CD8-positive, alpha-beta T cell (primary cell): ENCODE measurements at regions of chr12 and their contacts with region 1.

Region 1: DNA sequence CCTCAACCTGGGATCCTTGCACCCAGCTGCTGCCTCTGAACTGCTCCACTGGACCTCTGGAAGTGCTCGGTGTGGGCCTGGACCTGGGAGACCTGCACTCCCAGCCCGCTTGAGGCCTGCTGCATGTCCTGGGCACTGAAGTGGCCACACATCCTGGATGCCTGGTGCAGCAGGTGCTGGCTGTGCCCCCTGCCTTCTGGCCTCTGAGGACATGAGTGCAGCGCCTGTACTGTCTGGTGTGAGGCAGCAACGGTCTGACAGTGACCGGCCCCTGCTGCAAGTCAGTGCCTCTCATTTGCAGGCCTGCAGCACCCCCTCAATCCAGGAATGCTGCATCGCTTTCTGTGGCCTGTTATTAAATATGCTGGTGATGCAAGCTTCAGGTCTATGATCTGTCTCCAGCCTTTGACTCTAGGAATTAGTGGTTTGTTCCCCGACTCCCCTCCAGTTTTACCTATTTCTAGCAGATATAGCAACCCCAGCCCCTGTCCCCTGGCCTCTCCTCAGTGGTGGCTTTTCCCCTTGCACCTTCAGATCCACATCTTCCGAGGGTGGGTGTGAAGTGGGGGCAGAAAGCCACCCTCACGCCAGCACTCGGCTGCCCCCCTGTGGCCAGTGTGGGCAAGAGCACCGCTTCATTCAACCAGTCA is 3.6 kb downstream of the SMIM41 start:
- DNase-seq: peak; percentile 42 to 81 (median 66)
- ATAC-seq: peak; percentile 90
- H3K4me3 ChIP-seq: no peak overlapping the region
- H3K4me3 Mint-ChIP-seq: no peak overlapping the region
- H3K27ac ChIP-seq: no peak overlapping the region
- H3K27ac Mint-ChIP-seq: no peak overlapping the region
- H3K4me1 ChIP-seq: peaks cover 14% of the 10 kb centered on the region
- H3K4me1 Mint-ChIP-seq: peaks cover 10% of the 10 kb centered on the region
- H3K27me3 ChIP-seq: no peaks in the 10 kb centered on the region
- H3K27me3 Mint-ChIP-seq: peaks cover 4% of the 10 kb centered on the region
- CTCF ChIP-seq: peak; percentile 98

Region 2: GRCh38 chr12:51923501-51924271 is 159.4 kb before region 1 on chr12:
- CTCF ChIA-PET with region 1: no interaction called
- POLR2A ChIA-PET with region 1: no interaction called
- intact Hi-C with region 1: loop called in 1 of 2 experiments (anchors 10 kb)
- DNase-seq: peak; percentile 21 to 74 (median 55)
- ATAC-seq: peak; percentile 82
- H3K4me3 ChIP-seq: no peak overlapping the region
- H3K4me3 Mint-ChIP-seq: peak overlapping the region; percentile 43
- H3K27ac ChIP-seq: no peak overlapping the region
- H3K27ac Mint-ChIP-seq: no peak overlapping the region
- H3K4me1 ChIP-seq: peaks cover 4% of the 10 kb centered on the region
- H3K4me1 Mint-ChIP-seq: peaks cover 4% of the 10 kb centered on the region
- H3K27me3 ChIP-seq: peaks cover 0 to 7% of the 10 kb centered on the region in 2 experiments
- H3K27me3 Mint-ChIP-seq: peaks cover 3% of the 10 kb centered on the region
- CTCF ChIP-seq: peak; percentile 84

Region 3: GRCh38 chr12:51969643-51970042 is 113.5 kb before region 1 on chr12:
- CTCF ChIA-PET with region 1: no interaction called
- POLR2A ChIA-PET with region 1: no interaction called
- intact Hi-C with region 1: no loop called
- DNase-seq: no peak
- ATAC-seq: no peak
- H3K4me3 ChIP-seq: no peak overlapping the region
- H3K4me3 Mint-ChIP-seq: no peak overlapping the region
- H3K27ac ChIP-seq: no peak overlapping the region
- H3K27ac Mint-ChIP-seq: no peak overlapping the region
- H3K4me1 ChIP-seq: peaks cover 48% of the 10 kb centered on the region
- H3K4me1 Mint-ChIP-seq: peaks cover 48% of the 10 kb centered on the region
- H3K27me3 ChIP-seq: no peaks in the 10 kb centered on the region
- H3K27me3 Mint-ChIP-seq: no peaks in the 10 kb centered on the region
- CTCF ChIP-seq: no peak

Region 4: GRCh38 chr12:51980051-51980808 is 102.9 kb before region 1 on chr12:
- CTCF ChIA-PET with region 1: interaction called, 10 read pairs
- POLR2A ChIA-PET with region 1: no interaction called
- intact Hi-C with region 1: no loop called
- DNase-seq: peak; percentile 43 to 83 (median 68)
- ATAC-seq: peak; percentile 100
- H3K4me3 ChIP-seq: no peak overlapping the region
- H3K4me3 Mint-ChIP-seq: no peak overlapping the region
- H3K27ac ChIP-seq: no peak overlapping the region
- H3K27ac Mint-ChIP-seq: no peak overlapping the region
- H3K4me1 ChIP-seq: peaks cover 7% of the 10 kb centered on the region
- H3K4me1 Mint-ChIP-seq: peaks cover 26% of the 10 kb centered on the region
- H3K27me3 ChIP-seq: no peaks in the 10 kb centered on the region
- H3K27me3 Mint-ChIP-seq: no peaks in the 10 kb centered on the region
- CTCF ChIP-seq: peak; percentile 95

Region 5: DNA sequence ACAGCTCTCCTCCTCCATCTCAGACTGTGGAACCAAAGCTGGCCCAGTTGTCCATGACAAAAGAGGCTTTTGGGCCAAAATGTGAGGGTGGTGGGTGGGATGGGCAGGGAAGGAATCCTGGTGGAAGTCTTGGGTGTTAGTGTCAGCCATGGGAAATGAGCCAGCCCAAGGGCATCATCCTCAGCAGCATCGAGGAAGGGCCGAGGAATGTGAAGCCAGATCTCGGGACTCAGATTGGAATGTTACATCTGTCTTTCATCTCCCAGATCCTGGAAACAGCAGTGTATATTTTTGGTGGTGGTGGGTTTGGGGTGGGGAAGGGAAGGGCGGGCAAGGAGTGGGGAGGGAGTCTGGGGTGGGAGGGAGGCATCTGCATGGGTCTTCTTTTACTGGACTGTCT is 88.2 kb before region 1 on chr12:
- CTCF ChIA-PET with region 1: interaction called, 32 read pairs
- POLR2A ChIA-PET with region 1: no interaction called
- intact Hi-C with region 1: loop called (anchors 1 kb)
- DNase-seq: no peak
- ATAC-seq: no peak
- H3K4me3 ChIP-seq: no peak overlapping the region
- H3K4me3 Mint-ChIP-seq: no peak overlapping the region
- H3K27ac ChIP-seq: no peak overlapping the region
- H3K27ac Mint-ChIP-seq: no peak overlapping the region
- H3K4me1 ChIP-seq: no peaks in the 10 kb centered on the region
- H3K4me1 Mint-ChIP-seq: peaks cover 5% of the 10 kb centered on the region
- H3K27me3 ChIP-seq: no peaks in the 10 kb centered on the region
- H3K27me3 Mint-ChIP-seq: no peaks in the 10 kb centered on the region
- CTCF ChIP-seq: no peak

Region 6: GRCh38 chr12:52004042-52004648 is 79.0 kb before region 1 on chr12:
- CTCF ChIA-PET with region 1: interaction called, 15 read pairs
- POLR2A ChIA-PET with region 1: no interaction called
- intact Hi-C with region 1: no loop called
- DNase-seq: peak in 2 of 9 experiments; percentile 33 to 48
- ATAC-seq: no peak
- H3K4me3 ChIP-seq: no peak overlapping the region
- H3K4me3 Mint-ChIP-seq: no peak overlapping the region
- H3K27ac ChIP-seq: no peak overlapping the region
- H3K27ac Mint-ChIP-seq: no peak overlapping the region
- H3K4me1 ChIP-seq: peaks cover 20% of the 10 kb centered on the region
- H3K4me1 Mint-ChIP-seq: peaks cover 18% of the 10 kb centered on the region
- H3K27me3 ChIP-seq: peaks cover 0 to 4% of the 10 kb centered on the region in 2 experiments
- H3K27me3 Mint-ChIP-seq: no peaks in the 10 kb centered on the region
- CTCF ChIP-seq: peak; percentile 34

Region 7: GRCh38 chr12:52050761-52051541 is 32.2 kb before region 1 on chr12 and contains the start of gene NR4A1:
- CTCF ChIA-PET with region 1: interaction called, 5 read pairs
- POLR2A ChIA-PET with region 1: no interaction called
- intact Hi-C with region 1: loop called in 1 of 2 experiments (anchors 1 kb)
- DNase-seq: peak; percentile 97 to 100 (median 99)
- ATAC-seq: peak; percentile 90
- H3K4me3 ChIP-seq: peak within 1 kb of the TSS; percentile 80 to 87
- H3K4me3 Mint-ChIP-seq: peak within 1 kb of the TSS; percentile 97
- H3K27ac ChIP-seq: peak within 1 kb of the TSS; percentile 81 to 99
- H3K27ac Mint-ChIP-seq: peak within 1 kb of the TSS; percentile 99
- H3K4me1 ChIP-seq: peaks cover 30% of the 10 kb centered on the region
- H3K4me1 Mint-ChIP-seq: peaks cover 35% of the 10 kb centered on the region
- H3K27me3 ChIP-seq: no peaks in the 10 kb centered on the region
- H3K27me3 Mint-ChIP-seq: peaks cover 3% of the 10 kb centered on the region
- CTCF ChIP-seq: no peak
- total RNA-seq, gene NR4A1: 59.7 to 60.0 TPM

Region 8: DNA sequence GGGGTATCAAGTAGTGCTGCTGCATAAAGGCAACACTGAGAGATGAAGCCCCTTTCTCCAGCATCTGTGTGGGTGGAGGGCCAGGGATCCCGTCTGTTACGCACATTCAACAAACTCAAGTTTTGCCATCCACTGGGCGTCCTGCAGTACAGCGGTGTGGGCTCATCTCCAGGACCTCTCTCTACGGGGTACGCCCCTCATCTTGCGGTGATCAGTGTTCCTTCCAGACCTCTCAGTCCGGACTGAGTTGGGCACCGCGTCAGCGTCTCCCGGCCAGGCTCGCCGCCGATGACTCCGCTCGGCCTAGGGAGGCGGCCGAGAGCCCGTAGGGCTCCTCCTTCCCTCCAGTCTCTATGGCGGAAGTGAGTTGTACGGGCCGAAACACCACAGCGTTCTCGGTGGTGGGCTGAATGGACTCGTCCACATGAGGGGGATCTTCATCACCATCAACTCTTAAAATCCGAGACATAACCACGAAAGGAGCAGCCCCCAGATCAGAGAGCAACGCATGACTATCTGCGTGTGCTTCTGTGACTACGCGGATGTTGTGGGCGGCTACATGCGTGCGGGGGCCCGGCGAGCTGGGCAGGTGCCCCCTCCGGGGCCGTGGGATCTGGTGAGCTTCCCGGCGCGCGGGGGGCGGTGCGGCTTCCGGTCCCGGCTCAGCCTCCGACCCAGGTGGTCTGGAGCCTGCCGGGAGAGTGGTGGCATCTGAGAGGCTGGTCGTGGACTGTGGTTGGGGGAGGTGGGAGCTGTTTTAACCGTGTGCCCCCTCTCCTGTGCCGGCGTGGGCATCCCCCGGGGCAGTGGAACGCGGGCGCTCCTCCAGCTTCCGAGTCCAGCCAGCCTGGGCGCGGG is 13.6 kb before region 1 on chr12 and contains the start of gene ATG101:
- CTCF ChIA-PET with region 1: interaction called, 16 read pairs
- POLR2A ChIA-PET with region 1: no interaction called
- intact Hi-C with region 1: loop called in 1 of 2 experiments (anchors 1 kb)
- DNase-seq: peak; percentile 72 to 96 (median 84)
- ATAC-seq: peak; percentile 93
- H3K4me3 ChIP-seq: peak within 1 kb of the TSS; percentile 93 to 98
- H3K4me3 Mint-ChIP-seq: peak within 1 kb of the TSS; percentile 98
- H3K27ac ChIP-seq: peak within 1 kb of the TSS; percentile 87 to 96
- H3K27ac Mint-ChIP-seq: peak within 1 kb of the TSS; percentile 99
- H3K4me1 ChIP-seq: peaks cover 33% of the 10 kb centered on the region
- H3K4me1 Mint-ChIP-seq: peaks cover 47% of the 10 kb centered on the region
- H3K27me3 ChIP-seq: no peaks in the 10 kb centered on the region
- H3K27me3 Mint-ChIP-seq: no peaks in the 10 kb centered on the region
- CTCF ChIP-seq: peak; percentile 47
- total RNA-seq, gene ATG101: 19.1 to 19.3 TPM

Region 9: DNA sequence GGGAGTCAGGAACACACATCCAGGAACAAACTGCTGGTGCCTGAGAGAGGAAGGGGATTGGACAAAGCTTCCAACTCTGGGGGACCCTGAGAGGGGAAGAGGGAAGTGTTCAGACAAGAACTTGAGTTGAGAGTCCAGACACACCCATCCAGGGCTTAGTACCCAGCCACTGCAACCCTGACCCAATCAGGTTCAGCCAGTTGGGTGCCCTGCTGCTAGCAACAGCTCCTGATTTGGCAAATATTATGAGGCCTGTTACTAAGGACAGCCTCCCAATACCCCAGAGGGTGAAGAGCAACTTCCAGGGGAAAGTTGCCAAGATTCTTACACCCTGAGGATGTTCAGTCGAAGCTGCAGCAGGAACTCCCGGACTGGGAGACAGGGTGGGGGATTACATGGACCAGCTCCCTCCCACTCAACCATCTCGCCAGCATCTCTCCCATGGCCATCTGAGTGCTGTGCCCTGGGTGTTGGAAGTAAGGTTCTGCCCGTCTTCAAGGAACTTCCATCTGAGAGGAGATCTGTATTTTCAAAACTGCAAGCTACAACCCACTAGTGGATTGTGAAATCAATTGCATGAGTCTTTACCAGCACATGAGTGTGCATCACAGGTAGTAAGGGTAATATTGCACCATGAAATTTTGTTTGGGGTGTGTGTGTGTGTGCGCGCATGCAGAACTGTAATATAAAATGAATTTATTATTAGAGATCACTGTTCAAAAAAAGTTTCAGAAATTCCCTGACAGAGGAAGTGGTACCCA is 777.1 kb after region 1 on chr12:
- CTCF ChIA-PET with region 1: no interaction called
- POLR2A ChIA-PET with region 1: no interaction called
- intact Hi-C with region 1: no loop called
- DNase-seq: no peak
- ATAC-seq: no peak
- H3K4me3 ChIP-seq: no peak overlapping the region
- H3K4me3 Mint-ChIP-seq: no peak overlapping the region
- H3K27ac ChIP-seq: no peak overlapping the region
- H3K27ac Mint-ChIP-seq: no peak overlapping the region
- H3K4me1 ChIP-seq: no peaks in the 10 kb centered on the region
- H3K4me1 Mint-ChIP-seq: no peaks in the 10 kb centered on the region
- H3K27me3 ChIP-seq: no peaks in the 10 kb centered on the region
- H3K27me3 Mint-ChIP-seq: no peaks in the 10 kb centered on the region
- CTCF ChIP-seq: no peak